ENCODE measurements at regions of chr1 and their contacts with region 1.

Region 1: GRCh38 chr1:201023517-201023902 is at the start of gene KIF21B:
- H3K4me3 ChIP-seq: peak within 1 kb of the TSS; percentile 46
- H3K27ac ChIP-seq: peak within 1 kb of the TSS; percentile 27; the same call in 1 of the 2 replicates
- H3K4me1 ChIP-seq: no peaks in the 10 kb centered on the region
- CTCF ChIP-seq: no peak

Region 2: GRCh38 chr1:201042779-201043461 is 19.4 kb after region 1 on chr1:
- CTCF ChIA-PET with region 1: interaction called, 65 read pairs
- POLR2A ChIA-PET with region 1: no interaction called
- H3K4me3 ChIP-seq: no peak overlapping the region
- H3K27ac ChIP-seq: no peak overlapping the region
- H3K4me1 ChIP-seq: no peaks in the 10 kb centered on the region
- CTCF ChIP-seq: peak; percentile 84

Measured in HEK293 (cell line).